IMR-90 (cell line): ENCODE measurements at regions of chr17 and their contacts with region 1.

Region 1: GRCh38 chr17:5365831-5366230 is 53.6 kb downstream of the NUP88 start:
- DNase-seq: no peak
- ATAC-seq: no peak
- H3K4me3 ChIP-seq: no peak overlapping the region
- H3K27ac ChIP-seq: no peak overlapping the region
- H3K4me1 ChIP-seq: peaks cover 9% of the 10 kb centered on the region; the same call in 1 of the 2 replicates
- H3K27me3 ChIP-seq: no peaks in the 10 kb centered on the region
- CTCF ChIP-seq: no peak
- POLR2A ChIP-seq: no peak
- RAD21 ChIP-seq: no peak

Region 2: DNA sequence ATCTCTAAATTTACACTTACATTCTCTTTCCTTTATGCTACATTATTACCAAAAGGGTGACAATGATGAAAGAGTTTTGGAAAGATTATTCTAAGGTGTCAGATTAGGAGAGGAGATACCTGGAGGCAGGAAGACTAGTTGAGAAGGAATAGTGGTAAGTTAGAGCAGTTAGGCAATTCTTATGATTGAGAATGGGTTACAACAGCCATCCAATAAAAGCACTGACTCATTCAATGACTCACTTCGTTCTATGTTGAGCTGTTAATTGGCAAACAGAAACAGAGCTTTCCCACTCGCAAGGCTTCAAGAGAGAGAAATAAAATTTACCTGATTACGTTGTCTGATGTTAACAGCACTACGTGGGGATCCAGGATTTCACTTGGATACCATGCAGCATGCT is 47.9 kb after region 1 on chr17:
- CTCF ChIA-PET with region 1: no interaction called
- POLR2A ChIA-PET with region 1: no interaction called
- dilution Hi-C with region 1: no loop called
- in situ Hi-C with region 1: no loop called
- intact Hi-C with region 1: loop called (anchors 5 kb)
- DNase-seq: peak; percentile 93
- ATAC-seq: peak; percentile 79
- H3K4me3 ChIP-seq: no peak overlapping the region
- H3K27ac ChIP-seq: no peak overlapping the region; the same call in 1 of the 2 replicates
- H3K4me1 ChIP-seq: peaks cover 6% of the 10 kb centered on the region
- H3K27me3 ChIP-seq: no peaks in the 10 kb centered on the region
- CTCF ChIP-seq: no peak
- POLR2A ChIP-seq: no peak
- RAD21 ChIP-seq: no peak